Endothelial cell of umbilical vein (primary cell): ENCODE measurements at regions of chr10 and their contacts with region 1.

Region 1: DNA sequence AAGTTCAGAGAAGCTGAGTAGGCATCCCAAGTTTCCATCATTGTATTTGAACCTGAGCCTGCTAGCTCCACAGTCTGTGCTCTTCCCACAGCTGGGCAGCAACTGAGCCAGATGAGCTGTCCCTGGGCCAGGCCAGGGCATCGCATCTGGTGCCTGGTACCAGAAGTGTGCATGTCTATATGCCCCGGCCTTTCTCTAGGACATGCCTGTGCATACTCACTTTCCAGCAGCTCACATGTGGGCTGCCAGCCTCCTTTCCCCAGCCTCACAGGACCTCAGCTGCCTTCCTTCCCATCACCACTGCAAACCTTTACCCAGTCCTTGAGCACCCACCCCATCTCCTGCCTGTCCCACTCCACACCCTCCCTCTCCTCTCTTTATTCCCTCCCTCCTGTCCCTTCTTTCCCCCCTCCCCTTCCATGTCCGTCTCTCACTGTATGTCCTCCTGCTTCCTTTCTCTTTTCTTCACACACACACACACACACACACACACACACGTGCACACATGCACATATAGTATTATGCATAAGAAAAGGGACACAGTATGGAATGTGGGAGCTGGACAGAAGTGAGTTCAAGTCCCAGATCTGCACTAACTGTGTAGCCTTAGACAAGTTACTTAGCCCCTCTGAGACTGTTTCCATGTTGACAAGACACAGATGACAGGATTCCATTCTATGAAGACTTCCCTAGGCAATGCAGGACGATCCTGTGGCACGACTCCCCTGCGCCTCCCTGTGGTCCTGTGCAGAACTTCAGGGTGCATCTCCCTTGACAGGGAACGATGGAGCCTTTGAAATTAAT is 10.9 kb downstream of the CDHR1 start:
- DNase-seq: peak; percentile 39
- H3K4me3 ChIP-seq: no peak overlapping the region
- H3K27ac ChIP-seq: no peak overlapping the region
- H3K4me1 ChIP-seq: no peaks in the 10 kb centered on the region
- H3K27me3 ChIP-seq: no peaks in the 10 kb centered on the region
- CTCF ChIP-seq: peak; percentile 71 to 83
- POLR2A ChIP-seq: no peak

Region 2: GRCh38 chr10:84126785-84127167 is 78.5 kb before region 1 on chr10:
- CTCF ChIA-PET with region 1: no interaction called
- POLR2A ChIA-PET with region 1: no interaction called
- dilution Hi-C with region 1: no loop called
- intact Hi-C with region 1: loop called (anchors 2 kb)
- DNase-seq: no peak
- H3K4me3 ChIP-seq: no peak overlapping the region
- H3K27ac ChIP-seq: no peak overlapping the region
- H3K4me1 ChIP-seq: no peaks in the 10 kb centered on the region
- H3K27me3 ChIP-seq: no peaks in the 10 kb centered on the region
- CTCF ChIP-seq: no peak
- POLR2A ChIP-seq: no peak